ENCODE measurements at regions of chr3 and their contacts with region 1.

Region 1: DNA sequence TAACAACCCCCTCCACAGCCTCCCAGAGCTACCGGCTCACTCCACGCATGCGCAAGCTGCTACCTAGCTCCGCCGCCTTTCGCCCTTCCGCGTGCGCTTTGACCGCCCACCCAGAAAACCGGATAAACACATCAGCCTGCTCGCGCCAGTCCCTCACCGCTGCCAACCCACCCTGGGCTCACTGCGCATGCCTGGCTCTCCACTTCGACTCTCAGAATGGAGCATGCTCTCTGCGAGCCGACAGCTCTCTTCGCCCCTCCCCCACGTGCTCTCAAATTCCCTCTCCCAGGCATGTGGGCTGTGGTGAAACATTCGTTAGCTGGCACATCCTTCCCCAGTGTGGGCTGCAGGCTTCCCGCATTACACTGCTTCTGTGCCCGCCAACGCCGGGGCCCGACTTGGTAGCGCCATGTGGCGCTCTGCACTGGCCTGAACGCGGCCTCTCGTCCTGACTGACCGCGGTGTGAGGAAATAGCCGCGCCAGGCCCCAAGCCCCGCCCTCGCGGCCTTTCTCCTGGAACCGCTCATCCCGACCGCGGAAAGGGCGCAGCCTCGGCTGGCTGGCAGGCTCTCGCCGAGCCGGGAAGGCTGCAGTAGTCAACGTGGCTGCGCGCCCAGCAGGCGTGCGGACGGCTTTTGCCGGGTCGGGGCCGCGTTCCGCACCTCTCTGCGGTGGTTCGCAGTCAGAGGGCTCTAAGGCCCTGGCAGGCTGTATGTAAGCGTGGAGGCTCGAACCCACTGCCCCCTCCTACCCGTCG is 445 bp upstream of the MSL2 start:
- DNase-seq: peak; percentile 95 to 99 (median 99)
- ATAC-seq: peak; percentile 60
- H3K4me3 ChIP-seq: peak overlapping the region; percentile 84 to 91
- H3K4me3 Mint-ChIP-seq: peak overlapping the region; percentile 99
- H3K27ac ChIP-seq: peak overlapping the region; percentile 71 to 96
- H3K27ac Mint-ChIP-seq: peak overlapping the region; percentile 100
- H3K4me1 ChIP-seq: peaks cover 16% of the 10 kb centered on the region
- H3K4me1 Mint-ChIP-seq: peaks cover 37% of the 10 kb centered on the region
- H3K27me3 ChIP-seq: no peaks in the 10 kb centered on the region
- H3K27me3 Mint-ChIP-seq: no peaks in the 10 kb centered on the region
- CTCF ChIP-seq: no peak

Region 2: DNA sequence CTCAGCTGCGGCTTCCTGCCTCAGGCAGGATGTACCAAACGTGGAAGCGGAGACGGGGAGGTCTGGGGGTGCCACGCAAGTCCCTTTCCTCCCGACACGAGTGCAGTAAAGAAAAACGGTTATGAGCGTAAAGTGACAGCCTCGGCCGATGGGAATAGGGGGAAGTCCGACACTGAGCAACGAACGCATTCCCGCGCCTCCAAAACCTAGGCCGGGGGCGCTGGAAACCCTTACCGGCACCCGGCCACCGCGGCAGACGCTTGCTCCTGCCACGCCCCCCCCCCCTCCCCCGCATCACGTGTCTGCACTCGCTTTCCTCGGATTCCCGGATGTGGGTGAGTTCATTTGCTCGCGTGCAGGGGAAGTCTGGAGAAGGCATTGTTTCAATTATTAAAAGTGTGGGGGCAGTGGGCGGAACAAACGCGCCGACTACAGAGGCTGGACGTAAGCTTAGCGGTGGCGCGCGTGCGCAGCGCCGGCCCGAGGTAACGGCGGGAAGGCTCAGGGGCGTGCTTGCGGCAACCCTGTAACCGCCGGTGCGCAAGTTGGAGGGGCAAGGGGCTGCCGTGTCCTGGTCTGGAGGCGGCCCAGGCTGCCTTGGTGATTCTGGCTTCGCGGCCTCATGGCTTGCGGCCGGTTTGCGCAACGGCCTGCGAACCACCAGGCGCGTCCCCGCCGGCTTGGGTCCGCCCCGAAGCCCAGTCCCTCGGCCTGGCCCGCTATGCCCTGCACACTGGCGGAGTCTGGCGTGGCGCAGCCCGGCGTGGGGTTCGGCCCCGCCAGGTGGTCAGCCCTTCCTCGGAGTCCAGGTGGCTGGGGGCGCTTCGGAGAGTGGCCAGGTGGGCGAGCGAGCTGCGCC is 1710.6 kb before region 1 on chr3 and contains the starts of genes ANAPC13 and CEP63:
- CTCF ChIA-PET with region 1: no interaction called
- POLR2A ChIA-PET with region 1: no interaction called
- intact Hi-C with region 1: loop called in 1 of 2 experiments (anchors 10 kb)
- DNase-seq: peak; percentile 87 to 99 (median 93)
- ATAC-seq: peak; percentile 80
- H3K4me3 ChIP-seq: peak within 1 kb of the TSS; percentile 88 to 96
- H3K4me3 Mint-ChIP-seq: peak within 1 kb of the TSS; percentile 100
- H3K27ac ChIP-seq: peak within 1 kb of the TSS; percentile 88 to 96
- H3K27ac Mint-ChIP-seq: peak within 1 kb of the TSS; percentile 99
- H3K4me1 ChIP-seq: peaks cover 36% of the 10 kb centered on the region
- H3K4me1 Mint-ChIP-seq: peaks cover 60% of the 10 kb centered on the region
- H3K27me3 ChIP-seq: no peaks in the 10 kb centered on the region
- H3K27me3 Mint-ChIP-seq: no peaks in the 10 kb centered on the region
- CTCF ChIP-seq: no peak
- total RNA-seq, gene ANAPC13: 15.5 to 15.9 TPM
- total RNA-seq, gene CEP63: 14.6 to 16.9 TPM

Region 3: GRCh38 chr3:136142592-136142991 is 54.0 kb before region 1 on chr3:
- CTCF ChIA-PET with region 1: no interaction called
- POLR2A ChIA-PET with region 1: interaction called, 15 read pairs
- intact Hi-C with region 1: no loop called
- DNase-seq: peak in 2 of 9 experiments; percentile 21 to 48
- ATAC-seq: peak; percentile 68
- H3K4me3 ChIP-seq: no peak overlapping the region
- H3K4me3 Mint-ChIP-seq: no peak overlapping the region
- H3K27ac ChIP-seq: no peak overlapping the region
- H3K27ac Mint-ChIP-seq: peak overlapping the region; percentile 64
- H3K4me1 ChIP-seq: peaks cover 4% of the 10 kb centered on the region
- H3K4me1 Mint-ChIP-seq: peaks cover 31% of the 10 kb centered on the region
- H3K27me3 ChIP-seq: no peaks in the 10 kb centered on the region
- H3K27me3 Mint-ChIP-seq: no peaks in the 10 kb centered on the region
- CTCF ChIP-seq: no peak

Region 4: DNA sequence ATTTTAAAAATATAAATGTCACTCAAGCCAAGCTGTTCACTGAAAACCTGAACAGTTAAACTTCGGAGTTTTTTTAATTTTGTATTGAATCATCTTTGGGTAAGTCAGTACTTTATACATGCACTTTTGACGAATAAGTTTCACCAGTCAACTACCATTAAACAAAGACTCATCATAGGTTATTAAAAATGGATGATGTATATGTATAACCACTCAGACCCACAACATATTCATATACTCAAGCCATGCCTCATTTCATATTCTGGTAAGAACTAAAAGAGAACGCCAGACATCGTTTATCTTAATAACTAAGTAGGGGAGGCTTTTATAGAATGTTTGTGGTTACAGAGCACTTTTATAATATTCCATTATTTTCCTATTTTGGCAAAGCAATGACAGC is 18.7 kb before region 1 on chr3:
- CTCF ChIA-PET with region 1: interaction called, 7 read pairs
- POLR2A ChIA-PET with region 1: interaction called, 9 read pairs
- intact Hi-C with region 1: loop called in 1 of 2 experiments (anchors 2 kb)
- DNase-seq: no peak
- ATAC-seq: no peak
- H3K4me3 ChIP-seq: no peak overlapping the region
- H3K4me3 Mint-ChIP-seq: no peak overlapping the region
- H3K27ac ChIP-seq: no peak overlapping the region
- H3K27ac Mint-ChIP-seq: no peak overlapping the region
- H3K4me1 ChIP-seq: peaks cover 87% of the 10 kb centered on the region
- H3K4me1 Mint-ChIP-seq: peaks cover 64% of the 10 kb centered on the region
- H3K27me3 ChIP-seq: no peaks in the 10 kb centered on the region
- H3K27me3 Mint-ChIP-seq: no peaks in the 10 kb centered on the region
- CTCF ChIP-seq: no peak

Region 5: GRCh38 chr3:136250226-136250902 is 53.8 kb after region 1 on chr3 and contains the start of gene PCCB:
- CTCF ChIA-PET with region 1: interaction called, 7 read pairs
- POLR2A ChIA-PET with region 1: interaction called, 51 read pairs
- intact Hi-C with region 1: loop called (anchors 1 kb)
- DNase-seq: peak; percentile 84 to 95 (median 90)
- ATAC-seq: peak; percentile 96
- H3K4me3 ChIP-seq: peak within 1 kb of the TSS; percentile 88 to 93
- H3K4me3 Mint-ChIP-seq: peak within 1 kb of the TSS; percentile 94
- H3K27ac ChIP-seq: peak within 1 kb of the TSS; percentile 74 to 89
- H3K27ac Mint-ChIP-seq: peak within 1 kb of the TSS; percentile 85
- H3K4me1 ChIP-seq: peaks cover 16% of the 10 kb centered on the region
- H3K4me1 Mint-ChIP-seq: peaks cover 23% of the 10 kb centered on the region
- H3K27me3 ChIP-seq: no peaks in the 10 kb centered on the region
- H3K27me3 Mint-ChIP-seq: no peaks in the 10 kb centered on the region
- CTCF ChIP-seq: peak; percentile 91
- total RNA-seq, gene PCCB: 12.3 to 15.8 TPM

Region 6: DNA sequence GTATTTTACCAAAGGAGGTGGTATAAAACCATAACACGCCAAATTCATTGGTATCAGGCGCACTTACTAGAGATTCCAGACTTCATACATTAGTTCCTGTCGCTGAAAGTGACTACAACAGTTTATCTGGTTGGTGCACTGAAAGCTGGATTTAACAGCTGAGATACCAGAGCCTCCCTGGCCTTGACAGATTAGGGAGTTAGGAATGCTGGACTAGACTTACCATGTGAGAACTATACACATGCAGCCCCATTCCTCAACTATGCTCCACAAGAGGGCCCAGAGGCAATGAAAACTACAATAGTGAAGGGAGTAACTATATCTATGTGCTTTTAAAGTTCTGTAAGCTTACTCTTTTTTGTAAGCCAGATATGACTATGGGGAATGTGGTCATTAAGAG is 381.2 kb after region 1 on chr3:
- CTCF ChIA-PET with region 1: no interaction called
- POLR2A ChIA-PET with region 1: no interaction called
- intact Hi-C with region 1: no loop called
- DNase-seq: peak in 2 of 9 experiments; percentile 4 to 10
- ATAC-seq: no peak
- H3K4me3 ChIP-seq: no peak overlapping the region
- H3K4me3 Mint-ChIP-seq: no peak overlapping the region
- H3K27ac ChIP-seq: no peak overlapping the region
- H3K27ac Mint-ChIP-seq: no peak overlapping the region
- H3K4me1 ChIP-seq: no peaks in the 10 kb centered on the region
- H3K4me1 Mint-ChIP-seq: no peaks in the 10 kb centered on the region
- H3K27me3 ChIP-seq: no peaks in the 10 kb centered on the region
- H3K27me3 Mint-ChIP-seq: no peaks in the 10 kb centered on the region
- CTCF ChIP-seq: no peak

Region 7: GRCh38 chr3:136919799-136920580 is 723.4 kb after region 1 on chr3:
- CTCF ChIA-PET with region 1: no interaction called
- POLR2A ChIA-PET with region 1: no interaction called
- intact Hi-C with region 1: loop called in 1 of 2 experiments (anchors 10 kb)
- DNase-seq: peak in 3 of 9 experiments; percentile 9 to 88 (median 79)
- ATAC-seq: peak; percentile 93
- H3K4me3 ChIP-seq: no peak overlapping the region
- H3K4me3 Mint-ChIP-seq: peak overlapping the region; percentile 44
- H3K27ac ChIP-seq: peak overlapping the region in 1 of 2 experiments; percentile 90
- H3K27ac Mint-ChIP-seq: peak overlapping the region; percentile 84
- H3K4me1 ChIP-seq: peaks cover 56% of the 10 kb centered on the region
- H3K4me1 Mint-ChIP-seq: peaks cover 85% of the 10 kb centered on the region
- H3K27me3 ChIP-seq: no peaks in the 10 kb centered on the region
- H3K27me3 Mint-ChIP-seq: no peaks in the 10 kb centered on the region
- CTCF ChIP-seq: no peak

Region 8: GRCh38 chr3:138186803-138187295 is 1990.3 kb after region 1 on chr3:
- CTCF ChIA-PET with region 1: no interaction called
- POLR2A ChIA-PET with region 1: no interaction called
- intact Hi-C with region 1: loop called in 1 of 2 experiments (anchors 2 kb)
- DNase-seq: peak; percentile 79 to 95 (median 89)
- ATAC-seq: peak; percentile 95
- H3K4me3 ChIP-seq: peak overlapping the region; percentile 94
- H3K4me3 Mint-ChIP-seq: peak overlapping the region; percentile 97
- H3K27ac ChIP-seq: peak overlapping the region; percentile 90 to 92
- H3K27ac Mint-ChIP-seq: peak overlapping the region; percentile 98
- H3K4me1 ChIP-seq: peaks cover 29% of the 10 kb centered on the region
- H3K4me1 Mint-ChIP-seq: peaks cover 40% of the 10 kb centered on the region
- H3K27me3 ChIP-seq: peaks cover 0 to 3% of the 10 kb centered on the region in 2 experiments
- H3K27me3 Mint-ChIP-seq: peaks cover 5% of the 10 kb centered on the region
- CTCF ChIP-seq: no peak